Kidney (tissue), 22 donors: ENCODE measurements at regions of chr7 and their contacts with region 1.

Region 1: GRCh38 chr7:116588641-116589594 is 64.1 kb downstream of the CAV1 start:
- DNase-seq: peak in 2 of 5 donors; percentile 69 to 79
- H3K4me3 ChIP-seq: no peak overlapping the region
- H3K27ac ChIP-seq: no peak overlapping the region
- H3K4me1 ChIP-seq: peaks cover 0 to 10% (median 2%) of the 10 kb centered on the region in 3 donors
- H3K27me3 ChIP-seq: no peaks in the 10 kb centered on the region
- CTCF ChIP-seq: peak; percentile 68

Region 2: GRCh38 chr7:115707258-115708012 is 881.5 kb before region 1 on chr7:
- intact Hi-C with region 1: no loop called
- DNase-seq: peak in 3 of 5 donors; percentile 41 to 69 (median 64)
- H3K4me3 ChIP-seq: no peak overlapping the region
- H3K27ac ChIP-seq: no peak overlapping the region
- H3K4me1 ChIP-seq: no peaks in the 10 kb centered on the region
- H3K27me3 ChIP-seq: no peaks in the 10 kb centered on the region
- CTCF ChIP-seq: peak; percentile 31

Region 3: GRCh38 chr7:116258734-116259133 is 330.2 kb before region 1 on chr7:
- intact Hi-C with region 1: loop called (anchors 5 kb)
- DNase-seq: peak in 3 of 5 donors; percentile 25 to 70 (median 66)
- H3K4me3 ChIP-seq: no peak overlapping the region
- H3K27ac ChIP-seq: no peak overlapping the region
- H3K4me1 ChIP-seq: no peaks in the 10 kb centered on the region
- H3K27me3 ChIP-seq: no peaks in the 10 kb centered on the region
- CTCF ChIP-seq: peak; percentile 88

Region 4: GRCh38 chr7:116809636-116810266 is 220.8 kb after region 1 on chr7:
- intact Hi-C with region 1: loop called (anchors 10 kb)
- DNase-seq: peak in 3 of 5 donors; percentile 34 to 91 (median 90)
- H3K4me3 ChIP-seq: no peak overlapping the region
- H3K27ac ChIP-seq: peak overlapping the region; percentile 58 to 63
- H3K4me1 ChIP-seq: peaks cover 0 to 31% (median 7%) of the 10 kb centered on the region in 3 donors
- H3K27me3 ChIP-seq: no peaks in the 10 kb centered on the region
- CTCF ChIP-seq: peak; percentile 72